ENCODE measurements at regions of chr2 and their contacts with region 1.

Region 1: DNA sequence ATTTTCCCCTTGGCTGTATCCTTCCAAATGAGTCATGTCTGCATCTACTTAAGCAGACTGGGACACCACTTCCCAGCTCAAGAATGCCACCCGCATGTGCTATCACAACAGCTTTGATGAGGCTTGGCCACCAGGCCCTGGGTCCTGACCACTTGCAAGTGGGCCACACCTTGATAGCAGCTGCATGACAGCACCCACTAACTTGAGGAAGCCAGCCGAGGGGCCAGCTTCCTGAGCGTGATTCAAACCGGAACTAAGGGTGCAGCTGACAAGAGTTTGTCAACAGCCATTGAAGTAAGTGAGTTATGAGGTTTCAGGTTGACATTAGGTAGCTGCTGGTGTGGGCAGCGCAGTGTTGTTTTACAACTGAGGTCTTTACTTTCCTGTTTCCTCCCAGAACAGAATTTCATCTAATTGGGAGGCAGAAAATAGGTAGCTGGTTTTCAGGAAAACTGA is 54.4 kb downstream of the EPHA4 start:
- DNase-seq: peak in 1 of 2 donors; percentile 24
- ATAC-seq: peak in 6 of 8 donors; percentile 37 to 78 (median 57)
- H3K4me3 ChIP-seq: peak overlapping the region in 1 of 10 donors; percentile 16
- H3K27ac ChIP-seq: peak overlapping the region in 5 of 10 donors; percentile 11 to 73 (median 34)
- H3K4me1 ChIP-seq: peaks cover 15 to 65% (median 43%) of the 10 kb centered on the region in 9 donors
- H3K27me3 ChIP-seq: no peaks in the 10 kb centered on the region
- CTCF ChIP-seq: no peak

Region 2: DNA sequence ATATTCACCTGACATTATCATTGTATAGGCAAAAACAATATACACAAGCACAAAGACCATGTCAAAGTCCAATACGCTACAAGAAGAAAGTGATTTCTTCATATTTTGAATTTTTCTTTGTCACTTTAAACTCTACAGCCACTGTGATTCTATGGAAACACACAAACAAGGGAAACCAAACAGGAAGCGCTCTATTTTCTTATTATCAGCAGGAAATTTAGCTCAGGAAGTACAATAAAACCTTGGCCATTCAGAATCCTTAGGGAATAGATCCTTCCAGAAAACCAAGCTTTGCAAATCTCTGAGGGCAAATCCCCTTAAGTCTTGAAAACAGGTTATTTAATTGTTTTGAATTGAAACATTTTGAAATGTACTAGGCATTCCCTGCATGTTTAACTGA is 281.8 kb before region 1 on chr2:
- intact Hi-C with region 1: loop called in 1 of 10 experiments (anchors 10 kb)
- DNase-seq: peak in 1 of 2 donors; percentile 19
- ATAC-seq: peak in 7 of 8 donors; percentile 44 to 97 (median 80)
- H3K4me3 ChIP-seq: no peak overlapping the region
- H3K27ac ChIP-seq: peak overlapping the region in 9 of 10 donors; percentile 3 to 71 (median 37)
- H3K4me1 ChIP-seq: peaks cover 0 to 42% (median 6%) of the 10 kb centered on the region in 9 donors
- H3K27me3 ChIP-seq: no peaks in the 10 kb centered on the region
- CTCF ChIP-seq: no peak

Region 3: DNA sequence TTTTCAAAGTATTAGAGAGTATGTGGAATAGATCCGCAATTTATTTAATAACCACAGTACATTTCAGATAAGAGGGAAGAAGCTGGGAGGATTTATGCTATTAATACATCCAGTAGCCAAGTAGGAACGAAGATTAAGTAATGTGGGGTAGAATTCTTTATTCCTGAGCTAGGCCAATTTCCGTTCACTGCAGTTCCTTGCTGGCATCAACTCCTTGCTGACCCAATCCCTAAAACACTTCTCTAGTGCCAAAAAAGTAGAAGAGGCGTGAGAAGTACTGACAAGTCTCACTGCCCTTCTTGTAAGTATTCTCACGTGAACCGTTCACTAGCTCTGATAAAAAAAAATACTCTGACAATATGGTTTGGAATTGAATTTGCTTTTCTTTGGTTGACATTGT is 157.0 kb before region 1 on chr2:
- intact Hi-C with region 1: no loop called
- DNase-seq: no peak
- ATAC-seq: no peak
- H3K4me3 ChIP-seq: no peak overlapping the region
- H3K27ac ChIP-seq: no peak overlapping the region
- H3K4me1 ChIP-seq: peaks cover 0 to 3% (median 0%) of the 10 kb centered on the region in 9 donors
- H3K27me3 ChIP-seq: no peaks in the 10 kb centered on the region
- CTCF ChIP-seq: no peak

Region 4: DNA sequence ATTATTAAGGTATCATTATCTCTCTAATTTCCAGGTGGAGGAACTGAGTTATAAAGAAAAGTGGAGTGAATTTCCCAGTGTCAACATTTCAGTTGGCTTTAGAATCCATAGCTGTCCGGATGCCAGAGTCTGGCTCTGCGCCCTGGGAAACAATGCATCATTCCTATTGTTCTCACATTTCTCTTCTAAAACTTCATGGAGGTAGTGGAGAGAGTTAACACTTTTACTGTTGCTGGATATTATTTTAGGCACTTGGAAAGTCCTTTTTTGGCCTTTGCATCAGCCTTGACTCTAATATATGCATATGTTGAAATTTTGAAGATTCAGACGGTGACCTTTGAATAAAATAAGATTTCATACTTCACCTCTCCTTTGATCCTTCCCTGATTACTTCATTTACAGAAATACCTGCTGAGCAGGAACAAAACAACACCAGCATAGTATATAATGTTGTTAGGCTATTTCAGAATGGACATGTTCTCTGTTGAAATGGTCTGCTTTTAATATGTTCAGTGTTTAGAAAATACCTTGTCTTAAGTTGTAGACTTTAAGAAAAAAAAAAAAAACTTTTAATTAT is 94.4 kb before region 1 on chr2:
- intact Hi-C with region 1: loop called in 1 of 10 experiments (anchors 5 kb)
- DNase-seq: peak; percentile 20 to 62
- ATAC-seq: peak in 5 of 8 donors; percentile 33 to 89 (median 72)
- H3K4me3 ChIP-seq: no peak overlapping the region
- H3K27ac ChIP-seq: peak overlapping the region in 6 of 10 donors; percentile 2 to 56 (median 30)
- H3K4me1 ChIP-seq: peaks cover 0 to 29% (median 5%) of the 10 kb centered on the region in 9 donors
- H3K27me3 ChIP-seq: no peaks in the 10 kb centered on the region
- CTCF ChIP-seq: no peak

Region 5: GRCh38 chr2:221444106-221444505 is 73.6 kb before region 1 on chr2:
- intact Hi-C with region 1: loop called in 1 of 10 experiments (anchors 10 kb)
- DNase-seq: peak; percentile 24 to 48
- ATAC-seq: peak; percentile 69 to 96 (median 92)
- H3K4me3 ChIP-seq: no peak overlapping the region
- H3K27ac ChIP-seq: peak overlapping the region in 8 of 10 donors; percentile 10 to 77 (median 49)
- H3K4me1 ChIP-seq: peaks cover 3 to 35% (median 22%) of the 10 kb centered on the region in 9 donors
- H3K27me3 ChIP-seq: no peaks in the 10 kb centered on the region
- CTCF ChIP-seq: no peak

Region 6: DNA sequence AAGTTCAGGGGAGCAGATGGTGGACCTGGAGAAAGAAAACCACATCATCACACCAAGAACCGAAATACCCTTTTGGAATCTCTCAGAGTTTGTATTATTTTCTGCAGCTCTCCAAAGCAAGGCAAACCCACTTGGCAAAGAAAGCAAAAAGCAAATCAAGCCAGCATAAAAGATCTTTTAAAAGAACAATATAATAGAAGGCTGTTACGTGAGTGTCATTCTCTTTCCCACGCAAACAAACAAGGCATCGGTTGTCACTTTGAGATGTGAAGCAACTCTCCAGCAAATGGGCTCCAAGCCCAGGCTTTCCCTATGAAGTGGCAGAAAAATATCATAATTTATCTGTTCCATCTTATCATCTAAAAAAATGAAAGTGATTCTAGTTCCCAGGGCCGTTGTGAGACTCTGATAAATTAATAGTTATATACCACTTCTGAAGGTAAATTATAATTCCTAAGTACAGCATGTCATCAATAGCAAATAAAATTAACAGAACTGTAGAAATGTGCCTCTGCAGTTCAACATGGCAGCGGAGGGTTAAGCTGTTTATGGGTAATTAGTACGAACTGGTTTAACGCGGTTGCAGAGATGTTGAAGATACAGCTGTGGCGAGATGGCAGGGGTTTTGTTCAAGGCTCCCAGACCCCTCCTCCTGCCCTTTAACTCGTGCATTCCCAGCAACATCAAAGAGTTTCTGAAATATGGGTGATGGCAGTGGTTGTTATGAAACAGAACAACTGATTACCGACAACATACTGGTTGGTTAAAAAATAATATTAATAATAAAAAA is 34.9 kb before region 1 on chr2:
- intact Hi-C with region 1: no loop called
- DNase-seq: no peak
- ATAC-seq: no peak
- H3K4me3 ChIP-seq: no peak overlapping the region
- H3K27ac ChIP-seq: no peak overlapping the region
- H3K4me1 ChIP-seq: peaks cover 0 to 22% (median 11%) of the 10 kb centered on the region in 9 donors
- H3K27me3 ChIP-seq: no peaks in the 10 kb centered on the region
- CTCF ChIP-seq: no peak

Measured in heart right ventricle (tissue), 16 donors.